Common myeloid progenitor, CD34-positive (primary cell): ENCODE measurements at regions of chr1 and their contacts with region 1.

Region 1: GRCh38 chr1:147890177-147890790 is 12.3 kb upstream of the GJA8 start:
- DNase-seq: peak; percentile 46 to 73 (median 68)
- H3K4me3 ChIP-seq: no peak overlapping the region
- H3K27ac ChIP-seq: no peak overlapping the region
- H3K4me1 ChIP-seq: peaks cover 0 to 8% (median 0%) of the 10 kb centered on the region in 4 experiments
- H3K27me3 ChIP-seq: no peaks in the 10 kb centered on the region

Region 2: DNA sequence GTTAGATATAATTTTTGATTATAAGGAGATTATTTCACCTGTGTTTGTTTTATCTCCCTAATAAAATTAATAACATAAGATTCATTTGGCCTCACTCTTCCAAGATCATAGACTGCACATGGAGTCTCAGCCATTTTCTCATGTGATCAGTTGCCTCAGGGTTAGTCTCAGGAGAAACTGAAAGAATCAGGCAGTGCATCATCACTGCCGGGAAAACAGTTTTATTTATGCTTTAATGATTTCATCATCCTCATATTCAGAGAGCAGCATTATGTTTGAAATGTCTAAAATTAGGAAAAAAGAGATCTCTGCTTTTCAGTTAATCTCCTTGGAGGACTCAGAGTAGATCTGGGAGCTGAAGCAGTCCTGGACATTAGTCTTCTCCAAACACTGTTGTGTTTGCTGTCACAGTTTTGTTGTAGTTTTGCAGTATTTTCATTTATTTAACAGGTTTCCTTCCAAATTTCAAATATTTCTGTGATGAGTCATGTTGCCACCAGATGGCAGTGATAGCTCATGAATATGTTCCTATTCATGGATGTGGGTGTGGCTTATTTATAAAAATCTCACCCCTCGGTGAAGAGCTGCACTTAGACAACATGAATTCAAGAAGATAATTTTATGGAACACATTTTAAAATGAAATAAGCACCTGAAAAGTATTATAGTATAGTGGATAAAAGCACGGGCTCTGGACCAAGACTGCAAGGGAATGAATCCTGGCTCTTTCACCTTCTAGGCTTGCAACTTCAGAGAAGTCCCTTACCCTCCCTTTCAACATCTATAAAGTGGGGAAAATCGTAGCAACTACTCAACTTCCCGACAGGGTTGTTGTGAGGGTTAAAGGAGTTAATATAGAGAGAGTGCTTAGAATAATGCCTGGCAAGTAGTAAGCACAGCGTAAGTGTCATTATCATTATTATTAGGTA is 616.6 kb before region 1 on chr1:
- CTCF ChIA-PET with region 1: interaction called, 10 read pairs
- POLR2A ChIA-PET with region 1: no interaction called
- DNase-seq: peak; percentile 63 to 86 (median 81)
- H3K4me3 ChIP-seq: no peak overlapping the region
- H3K27ac ChIP-seq: no peak overlapping the region
- H3K4me1 ChIP-seq: no peaks in the 10 kb centered on the region
- H3K27me3 ChIP-seq: no peaks in the 10 kb centered on the region

Region 3: GRCh38 chr1:147723691-147724323 is 166.5 kb before region 1 on chr1:
- CTCF ChIA-PET with region 1: interaction called, 27 read pairs
- POLR2A ChIA-PET with region 1: interaction called, 4 read pairs
- DNase-seq: peak; percentile 32 to 63 (median 56)
- H3K4me3 ChIP-seq: no peak overlapping the region
- H3K27ac ChIP-seq: no peak overlapping the region
- H3K4me1 ChIP-seq: peaks cover 0 to 2% (median 0%) of the 10 kb centered on the region in 4 experiments
- H3K27me3 ChIP-seq: no peaks in the 10 kb centered on the region

Region 4: GRCh38 chr1:147902183-147902845 is 12.0 kb after region 1 on chr1 and contains the start of gene GJA8:
- CTCF ChIA-PET with region 1: interaction called, 10 read pairs
- POLR2A ChIA-PET with region 1: interaction called, 3 read pairs
- DNase-seq: no peak
- H3K4me3 ChIP-seq: no peak within 1 kb of the TSS
- H3K27ac ChIP-seq: no peak within 1 kb of the TSS
- H3K4me1 ChIP-seq: peaks cover 0 to 7% (median 0%) of the 10 kb centered on the region in 4 experiments
- H3K27me3 ChIP-seq: no peaks in the 10 kb centered on the region

Region 5: GRCh38 chr1:147919896-147920295 is 29.6 kb after region 1 on chr1:
- CTCF ChIA-PET with region 1: no interaction called
- POLR2A ChIA-PET with region 1: no interaction called
- DNase-seq: no peak
- H3K4me3 ChIP-seq: no peak overlapping the region
- H3K27ac ChIP-seq: no peak overlapping the region
- H3K4me1 ChIP-seq: no peaks in the 10 kb centered on the region
- H3K27me3 ChIP-seq: peaks cover 0 to 2% (median 0%) of the 10 kb centered on the region in 5 experiments

Region 6: GRCh38 chr1:148010527-148010926 is 120.2 kb after region 1 on chr1:
- CTCF ChIA-PET with region 1: no interaction called
- POLR2A ChIA-PET with region 1: no interaction called
- DNase-seq: no peak
- H3K4me3 ChIP-seq: no peak overlapping the region
- H3K27ac ChIP-seq: no peak overlapping the region
- H3K4me1 ChIP-seq: peaks cover 0 to 15% (median 6%) of the 10 kb centered on the region in 4 experiments
- H3K27me3 ChIP-seq: peaks cover 4 to 37% (median 17%) of the 10 kb centered on the region in 5 experiments